Dendritic cell treated with granulocyte-macrophage colony-stimulating factor and Interleukin-4, amounts not matched to agents 40 ng/mL and 50 ng/mL, for 4 days (primary cell): ENCODE measurements at regions of chr11 and their contacts with region 1.

Region 1: GRCh38 chr11:26162291-26162690 is 169.6 kb upstream of the ANO3 start:
- H3K4me3 Mint-ChIP-seq: no peak overlapping the region
- H3K27ac Mint-ChIP-seq: no peak overlapping the region
- H3K4me1 Mint-ChIP-seq: no peaks in the 10 kb centered on the region
- H3K27me3 Mint-ChIP-seq: no peaks in the 10 kb centered on the region

Region 2: GRCh38 chr11:26112190-26112715 is 50.0 kb before region 1 on chr11:
- intact Hi-C with region 1: loop called (anchors 5 kb)
- H3K4me3 Mint-ChIP-seq: no peak overlapping the region
- H3K27ac Mint-ChIP-seq: no peak overlapping the region
- H3K4me1 Mint-ChIP-seq: no peaks in the 10 kb centered on the region
- H3K27me3 Mint-ChIP-seq: no peaks in the 10 kb centered on the region